ENCODE measurements at regions of chr11 and their contacts with region 1.

Region 1: GRCh38 chr11:124586238-124586860 is 16.6 kb downstream of the OR8A1 start:
- DNase-seq: peak; percentile 70
- H3K4me3 Mint-ChIP-seq: no peak overlapping the region
- H3K27ac Mint-ChIP-seq: no peak overlapping the region
- H3K4me1 Mint-ChIP-seq: no peaks in the 10 kb centered on the region
- H3K27me3 Mint-ChIP-seq: peaks cover 14% of the 10 kb centered on the region

Region 2: GRCh38 chr11:124380585-124380984 is 205.8 kb before region 1 on chr11:
- CTCF ChIA-PET with region 1: no interaction called
- intact Hi-C with region 1: no loop called
- DNase-seq: no peak
- H3K4me3 Mint-ChIP-seq: no peak overlapping the region
- H3K27ac Mint-ChIP-seq: no peak overlapping the region
- H3K4me1 Mint-ChIP-seq: no peaks in the 10 kb centered on the region
- H3K27me3 Mint-ChIP-seq: no peaks in the 10 kb centered on the region

Region 3: DNA sequence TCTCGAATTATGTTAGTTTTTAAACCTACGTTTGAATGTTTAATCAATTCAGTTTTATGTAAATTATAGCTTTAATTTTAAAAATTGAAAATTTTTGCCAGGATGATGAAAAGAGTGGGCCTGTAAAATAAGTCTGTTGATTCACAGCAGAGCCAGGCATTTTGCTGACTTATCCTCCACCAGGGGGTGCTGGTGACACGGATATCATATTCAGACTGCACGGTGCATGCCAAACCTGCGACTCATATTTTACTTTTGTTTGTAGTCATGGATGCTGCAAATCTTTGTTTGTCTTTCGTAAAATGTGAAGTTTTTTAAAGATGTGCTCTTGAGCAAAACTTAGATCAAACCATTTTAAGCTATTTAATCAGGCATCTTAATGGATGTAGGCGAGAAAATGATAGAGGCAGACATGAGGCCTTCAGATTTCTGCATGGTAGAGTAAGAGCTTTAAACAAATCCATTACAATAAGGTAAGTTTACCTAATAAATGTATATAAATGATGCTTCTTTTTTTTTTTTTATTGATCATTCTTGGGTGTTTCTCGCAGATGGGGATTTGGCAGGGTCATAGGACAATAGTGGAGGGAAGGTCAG is 183.9 kb before region 1 on chr11:
- CTCF ChIA-PET with region 1: interaction called, 16 read pairs
- intact Hi-C with region 1: loop called (anchors 1 kb)
- DNase-seq: peak; percentile 82
- H3K4me3 Mint-ChIP-seq: no peak overlapping the region
- H3K27ac Mint-ChIP-seq: no peak overlapping the region
- H3K4me1 Mint-ChIP-seq: no peaks in the 10 kb centered on the region
- H3K27me3 Mint-ChIP-seq: peaks cover 6% of the 10 kb centered on the region

Region 4: DNA sequence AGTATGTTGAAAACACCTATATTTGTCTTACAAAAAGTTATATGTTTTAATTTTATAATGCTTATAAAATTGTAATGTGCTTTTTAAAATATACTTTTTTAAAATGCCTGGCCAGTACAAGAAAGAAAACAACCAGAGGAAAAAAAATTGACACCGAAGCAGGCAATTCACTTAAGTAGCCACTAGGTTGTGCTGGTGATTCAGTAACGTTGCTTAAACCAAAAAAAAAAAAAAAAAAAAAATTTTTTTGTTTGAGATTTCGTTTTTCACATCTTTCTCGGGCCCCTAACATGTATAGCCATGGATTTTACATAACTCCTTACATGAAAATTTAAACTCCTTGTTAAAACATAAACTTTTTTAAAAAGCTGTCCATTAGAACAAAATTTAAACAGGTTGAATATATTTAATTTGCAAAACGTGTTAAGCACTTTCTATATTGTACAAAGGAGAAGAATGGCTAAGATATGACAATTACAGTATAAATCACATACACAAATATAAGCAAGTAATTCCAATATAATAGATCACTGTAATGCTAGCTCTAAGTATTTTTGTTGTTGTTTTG is 170.9 kb before region 1 on chr11:
- CTCF ChIA-PET with region 1: interaction called, 17 read pairs
- intact Hi-C with region 1: loop called (anchors 1 kb)
- DNase-seq: no peak
- H3K4me3 Mint-ChIP-seq: no peak overlapping the region
- H3K27ac Mint-ChIP-seq: no peak overlapping the region
- H3K4me1 Mint-ChIP-seq: no peaks in the 10 kb centered on the region
- H3K27me3 Mint-ChIP-seq: peaks cover 15% of the 10 kb centered on the region